ENCODE measurements at regions of chr9 and their contacts with region 1.

Region 1: GRCh38 chr9:107172160-107172978 is 110.7 kb upstream of the RAD23B start:
- DNase-seq: peak; percentile 8 to 66 (median 55)
- ATAC-seq: peak; percentile 65
- H3K4me3 ChIP-seq: no peak overlapping the region
- H3K4me3 Mint-ChIP-seq: no peak overlapping the region
- H3K27ac ChIP-seq: no peak overlapping the region
- H3K27ac Mint-ChIP-seq: no peak overlapping the region
- H3K4me1 ChIP-seq: no peaks in the 10 kb centered on the region
- H3K4me1 Mint-ChIP-seq: no peaks in the 10 kb centered on the region
- H3K27me3 ChIP-seq: peaks cover 0 to 3% of the 10 kb centered on the region in 2 experiments
- H3K27me3 Mint-ChIP-seq: peaks cover 9% of the 10 kb centered on the region
- CTCF ChIP-seq: peak; percentile 68

Region 2: GRCh38 chr9:105608721-105609598 is 1563.4 kb before region 1 on chr9:
- CTCF ChIA-PET with region 1: no interaction called
- POLR2A ChIA-PET with region 1: no interaction called
- intact Hi-C with region 1: loop called (anchors 5 kb)
- DNase-seq: peak in 2 of 9 experiments; percentile 47 to 61
- ATAC-seq: no peak
- H3K4me3 ChIP-seq: no peak overlapping the region
- H3K4me3 Mint-ChIP-seq: no peak overlapping the region
- H3K27ac ChIP-seq: no peak overlapping the region
- H3K27ac Mint-ChIP-seq: no peak overlapping the region
- H3K4me1 ChIP-seq: no peaks in the 10 kb centered on the region
- H3K4me1 Mint-ChIP-seq: no peaks in the 10 kb centered on the region
- H3K27me3 ChIP-seq: no peaks in the 10 kb centered on the region
- H3K27me3 Mint-ChIP-seq: no peaks in the 10 kb centered on the region
- CTCF ChIP-seq: peak; percentile 70

Region 3: DNA sequence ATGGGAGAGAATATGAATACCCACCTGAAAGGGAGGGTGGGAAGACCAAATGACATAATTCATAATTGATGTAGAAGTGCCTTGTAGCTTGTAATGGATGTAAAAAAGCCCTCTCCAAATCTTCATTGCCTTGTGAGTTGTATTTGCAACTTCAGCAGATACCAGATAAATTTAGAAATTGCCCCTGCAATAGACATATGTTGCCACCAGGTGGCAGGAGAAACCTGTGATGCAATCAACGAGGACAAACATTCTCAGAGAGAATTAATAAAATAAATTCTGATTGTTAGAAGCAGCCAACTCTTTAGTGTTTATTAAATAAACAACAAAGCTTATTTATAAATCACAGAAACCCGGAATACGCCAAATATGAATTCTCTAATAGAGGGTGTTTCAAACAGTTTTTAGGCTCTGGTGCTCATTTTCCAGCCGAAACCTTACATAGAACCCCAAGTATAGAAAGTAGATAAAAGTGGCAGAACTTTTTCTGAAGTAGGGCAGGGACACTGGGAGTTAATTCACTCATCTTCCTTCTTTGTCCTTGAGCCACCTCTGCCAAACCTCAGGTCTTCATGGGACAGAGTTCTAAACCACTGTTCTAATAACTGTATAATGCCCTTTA is 1330.2 kb before region 1 on chr9:
- CTCF ChIA-PET with region 1: interaction called, 6 read pairs
- POLR2A ChIA-PET with region 1: no interaction called
- intact Hi-C with region 1: loop called in 1 of 2 experiments (anchors 2 kb)
- DNase-seq: peak in 4 of 9 experiments; percentile 7 to 37 (median 10)
- ATAC-seq: no peak
- H3K4me3 ChIP-seq: no peak overlapping the region
- H3K4me3 Mint-ChIP-seq: no peak overlapping the region
- H3K27ac ChIP-seq: no peak overlapping the region
- H3K27ac Mint-ChIP-seq: no peak overlapping the region
- H3K4me1 ChIP-seq: no peaks in the 10 kb centered on the region
- H3K4me1 Mint-ChIP-seq: no peaks in the 10 kb centered on the region
- H3K27me3 ChIP-seq: no peaks in the 10 kb centered on the region
- H3K27me3 Mint-ChIP-seq: peaks cover 2% of the 10 kb centered on the region
- CTCF ChIP-seq: peak; percentile 83